GM13977 (cell line): ENCODE measurements at regions of chr10 and their contacts with region 1.

Region 1: GRCh38 chr10:123154092-123154921 is at the start of gene BUB3:
- DNase-seq: peak; percentile 98
- CTCF ChIP-seq: no peak

Region 2: GRCh38 chr10:123398180-123398591 is 243.9 kb after region 1 on chr10:
- in situ Hi-C with region 1: loop called (anchors 10 kb)
- DNase-seq: peak; percentile 78
- CTCF ChIP-seq: no peak

Region 3: DNA sequence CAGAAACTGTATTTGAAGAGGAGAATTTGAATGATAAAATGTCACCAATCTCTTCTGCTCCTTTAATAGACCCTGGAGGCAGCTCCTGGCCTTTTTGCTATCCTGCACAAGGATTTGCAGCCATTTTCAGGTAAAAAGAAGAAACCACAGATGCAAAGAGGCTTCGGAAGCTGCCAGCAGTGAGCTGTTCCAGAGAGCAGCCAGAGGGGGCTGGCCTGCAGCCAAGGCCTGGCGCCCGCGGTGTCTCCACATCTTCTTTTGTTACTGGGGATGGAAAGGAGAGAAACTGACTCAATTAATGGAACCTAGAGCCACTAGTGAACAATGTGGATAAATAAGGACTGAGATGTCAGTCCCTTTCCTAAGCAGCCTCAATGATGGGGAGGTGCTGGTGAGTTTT is 488.0 kb after region 1 on chr10:
- in situ Hi-C with region 1: no loop called
- DNase-seq: no peak
- CTCF ChIP-seq: no peak